ENCODE measurements at regions of chr13 and their contacts with region 1.

Region 1: GRCh38 chr13:50081679-50082425 is 66.6 kb downstream of the KCNRG start:
- DNase-seq: peak; percentile 99
- H3K4me3 Mint-ChIP-seq: peak overlapping the region; percentile 99
- H3K27ac Mint-ChIP-seq: peak overlapping the region; percentile 100
- H3K4me1 Mint-ChIP-seq: peaks cover 41% of the 10 kb centered on the region
- H3K27me3 Mint-ChIP-seq: peaks cover 4% of the 10 kb centered on the region

Region 2: GRCh38 chr13:49936085-49936940 is 145.5 kb before region 1 on chr13 and contains the start of gene SPRYD7:
- CTCF ChIA-PET with region 1: interaction called, 5 read pairs
- POLR2A ChIA-PET with region 1: interaction called, 4 read pairs
- intact Hi-C with region 1: loop called (anchors 2 kb)
- DNase-seq: peak; percentile 97
- H3K4me3 Mint-ChIP-seq: peak within 1 kb of the TSS; percentile 92
- H3K27ac Mint-ChIP-seq: peak within 1 kb of the TSS; percentile 77
- H3K4me1 Mint-ChIP-seq: peaks cover 12% of the 10 kb centered on the region
- H3K27me3 Mint-ChIP-seq: no peaks in the 10 kb centered on the region
- total RNA-seq, gene SPRYD7: 4.9 to 5.4 TPM

Region 3: DNA sequence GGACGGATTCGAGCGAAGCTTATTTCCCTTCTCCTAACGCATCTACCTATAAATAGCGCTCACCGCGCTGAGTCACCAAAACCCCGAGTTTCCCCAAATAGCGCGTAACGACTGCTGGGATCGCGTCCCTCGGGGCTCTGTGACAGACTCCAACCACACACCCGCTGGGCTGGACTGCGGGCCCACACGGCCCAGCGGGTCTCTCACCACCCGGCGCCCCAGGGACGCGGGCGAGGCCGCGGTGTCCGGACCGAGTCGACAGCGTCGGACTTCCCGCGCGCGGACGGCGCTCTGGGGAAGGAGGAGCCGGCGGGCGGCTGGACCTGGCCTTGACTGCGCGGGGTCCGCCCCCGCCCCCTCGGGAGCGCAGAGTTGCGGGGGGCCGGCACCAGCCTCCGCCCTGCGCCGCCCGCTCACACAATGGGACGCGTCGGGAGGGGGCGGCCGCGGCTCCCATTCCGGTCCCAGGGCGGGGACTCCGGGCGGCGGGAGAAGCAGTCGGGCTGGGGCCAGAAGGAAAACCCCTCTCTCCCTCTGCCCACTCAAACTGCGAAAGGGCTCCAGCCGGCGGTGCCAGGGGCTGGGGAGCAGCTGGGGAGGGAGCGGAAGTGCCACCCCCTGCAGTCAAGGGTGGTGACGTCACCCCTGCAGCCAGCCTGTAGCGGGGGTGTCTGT is 42.1 kb after region 1 on chr13:
- CTCF ChIA-PET with region 1: interaction called, 36 read pairs
- POLR2A ChIA-PET with region 1: interaction called, 132 read pairs
- intact Hi-C with region 1: loop called (anchors 1 kb)
- DNase-seq: peak; percentile 88
- H3K4me3 Mint-ChIP-seq: peak overlapping the region; percentile 81
- H3K27ac Mint-ChIP-seq: peak overlapping the region; percentile 90
- H3K4me1 Mint-ChIP-seq: peaks cover 58% of the 10 kb centered on the region
- H3K27me3 Mint-ChIP-seq: peaks cover 16% of the 10 kb centered on the region

Region 4: GRCh38 chr13:50152655-50153309 is 70.9 kb after region 1 on chr13:
- CTCF ChIA-PET with region 1: no interaction called
- POLR2A ChIA-PET with region 1: no interaction called
- intact Hi-C with region 1: no loop called
- DNase-seq: no peak
- H3K4me3 Mint-ChIP-seq: peak overlapping the region; percentile 33
- H3K27ac Mint-ChIP-seq: no peak overlapping the region
- H3K4me1 Mint-ChIP-seq: peaks cover 21% of the 10 kb centered on the region
- H3K27me3 Mint-ChIP-seq: peaks cover 2% of the 10 kb centered on the region

Region 5: GRCh38 chr13:50236898-50237318 is 155.1 kb after region 1 on chr13:
- CTCF ChIA-PET with region 1: no interaction called
- POLR2A ChIA-PET with region 1: interaction called, 3 read pairs
- intact Hi-C with region 1: loop called (anchors 1 kb)
- DNase-seq: peak; percentile 55
- H3K4me3 Mint-ChIP-seq: peak overlapping the region; percentile 65
- H3K27ac Mint-ChIP-seq: peak overlapping the region; percentile 81
- H3K4me1 Mint-ChIP-seq: peaks cover 49% of the 10 kb centered on the region
- H3K27me3 Mint-ChIP-seq: peaks cover 23% of the 10 kb centered on the region

Region 6: GRCh38 chr13:50531917-50532899 is 450.4 kb after region 1 on chr13:
- CTCF ChIA-PET with region 1: interaction called, 4 read pairs
- POLR2A ChIA-PET with region 1: no interaction called
- intact Hi-C with region 1: loop called (anchors 1 kb)
- DNase-seq: no peak
- H3K4me3 Mint-ChIP-seq: no peak overlapping the region
- H3K27ac Mint-ChIP-seq: no peak overlapping the region
- H3K4me1 Mint-ChIP-seq: peaks cover 15% of the 10 kb centered on the region
- H3K27me3 Mint-ChIP-seq: no peaks in the 10 kb centered on the region

Region 7: GRCh38 chr13:50911937-50912795 is 830.3 kb after region 1 on chr13:
- CTCF ChIA-PET with region 1: interaction called, 10 read pairs
- POLR2A ChIA-PET with region 1: interaction called, 3 read pairs
- intact Hi-C with region 1: loop called (anchors 1 kb)
- DNase-seq: peak; percentile 95
- H3K4me3 Mint-ChIP-seq: peak overlapping the region; percentile 94
- H3K27ac Mint-ChIP-seq: peak overlapping the region; percentile 98
- H3K4me1 Mint-ChIP-seq: peaks cover 51% of the 10 kb centered on the region
- H3K27me3 Mint-ChIP-seq: no peaks in the 10 kb centered on the region